HepG2 (cell line): ENCODE measurements at regions of chr11 and their contacts with region 1.

Region 1: GRCh38 chr11:2151500-2152257 is 9.3 kb downstream of the INS start:
- DNase-seq: peak; percentile 73
- ATAC-seq: peak; percentile 39
- H3K4me3 ChIP-seq: peak overlapping the region in 1 of 3 experiments; percentile 31; a peak in 1 of 6 replicates
- H3K27ac ChIP-seq: no peak overlapping the region
- H3K4me1 ChIP-seq: peaks cover 20% of the 10 kb centered on the region
- H3K27me3 ChIP-seq: peaks cover 20 to 44% of the 10 kb centered on the region in 2 experiments
- CTCF ChIP-seq: peak; percentile 86
- EP300 ChIP-seq: no peak
- POLR2A ChIP-seq: no peak
- RAD21 ChIP-seq: peak; percentile 83

Region 2: DNA sequence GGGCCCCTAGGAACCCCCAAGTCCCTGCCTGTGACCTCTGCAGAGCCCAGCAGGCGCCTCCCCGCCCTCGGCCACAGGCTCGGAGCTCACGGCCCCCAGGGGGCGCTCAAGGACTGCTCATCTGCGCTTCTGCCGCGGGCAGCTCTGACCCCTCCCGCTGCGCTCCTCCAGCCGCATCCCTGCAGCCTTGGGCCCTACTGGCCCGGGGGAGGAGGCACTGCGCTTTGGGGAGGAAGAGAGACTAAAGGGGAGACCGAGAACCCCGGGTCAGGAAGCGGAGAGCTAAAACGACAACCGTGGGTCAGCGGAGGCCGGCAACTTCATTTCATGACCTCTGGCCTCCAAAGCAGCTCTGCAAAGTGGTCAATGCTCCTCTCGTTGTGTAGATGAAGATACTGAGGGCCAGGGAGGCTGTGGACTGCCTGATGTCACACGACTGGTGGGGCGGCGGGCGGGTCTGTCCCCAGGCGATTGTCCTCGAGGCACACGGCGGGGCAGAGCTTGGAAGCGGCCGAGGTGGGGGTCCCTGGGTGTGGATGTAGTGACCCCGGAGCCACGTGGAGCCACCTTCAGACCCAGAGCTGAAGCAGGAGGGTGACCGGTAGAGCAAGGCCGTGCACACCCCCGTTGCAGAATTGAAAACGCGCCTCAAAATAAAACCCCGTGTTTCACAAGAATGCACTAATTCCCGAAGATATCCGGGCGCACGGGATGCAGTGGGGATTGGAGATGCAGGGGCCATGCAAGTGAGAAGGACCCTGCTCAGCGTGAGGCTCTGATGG is 457.4 kb before region 1 on chr11:
- CTCF ChIA-PET with region 1: interaction called, 24 read pairs
- POLR2A ChIA-PET with region 1: interaction called, 7 read pairs
- in situ Hi-C with region 1: loop called (anchors 5 kb)
- intact Hi-C with region 1: loop called (anchors 2 kb)
- DNase-seq: peak; percentile 53
- ATAC-seq: peak; percentile 38
- H3K4me3 ChIP-seq: peak overlapping the region in 2 of 3 experiments; percentile 14 to 58; a peak in 3 of 6 replicates
- H3K27ac ChIP-seq: peak overlapping the region; percentile 100
- H3K4me1 ChIP-seq: peaks cover 69% of the 10 kb centered on the region
- H3K27me3 ChIP-seq: peaks cover 0 to 3% of the 10 kb centered on the region in 2 experiments; a peak in 3 of 5 replicates
- CTCF ChIP-seq: peak; percentile 99
- EP300 ChIP-seq: peak in 1 of 2 experiments; percentile 38; a peak in 1 of 4 replicates
- POLR2A ChIP-seq: no peak
- RAD21 ChIP-seq: peak; percentile 97

Region 3: GRCh38 chr11:1837171-1838076 is 314.3 kb before region 1 on chr11:
- CTCF ChIA-PET with region 1: interaction called, 60 read pairs
- POLR2A ChIA-PET with region 1: no interaction called
- in situ Hi-C with region 1: loop called (anchors 5 kb)
- intact Hi-C with region 1: loop called (anchors 1 kb)
- DNase-seq: peak; percentile 45
- ATAC-seq: peak; percentile 64
- H3K4me3 ChIP-seq: no peak overlapping the region
- H3K27ac ChIP-seq: no peak overlapping the region
- H3K4me1 ChIP-seq: peaks cover 60% of the 10 kb centered on the region
- H3K27me3 ChIP-seq: peaks cover 9 to 20% of the 10 kb centered on the region in 2 experiments; a peak in 4 of 5 replicates
- CTCF ChIP-seq: peak; percentile 97
- EP300 ChIP-seq: no peak
- POLR2A ChIP-seq: no peak
- RAD21 ChIP-seq: peak; percentile 92

Region 4: GRCh38 chr11:1946812-1947484 is 204.7 kb before region 1 on chr11 and contains the start of gene MRPL23:
- CTCF ChIA-PET with region 1: interaction called, 27 read pairs
- POLR2A ChIA-PET with region 1: interaction called, 7 read pairs
- in situ Hi-C with region 1: no loop called
- intact Hi-C with region 1: no loop called
- DNase-seq: no peak
- ATAC-seq: peak; percentile 57
- H3K4me3 ChIP-seq: no peak within 1 kb of the TSS
- H3K27ac ChIP-seq: no peak within 1 kb of the TSS
- H3K4me1 ChIP-seq: peaks cover 7% of the 10 kb centered on the region; the same call in 1 of the 2 replicates
- H3K27me3 ChIP-seq: peaks cover 0 to 4% of the 10 kb centered on the region in 2 experiments; a peak in 2 of 5 replicates
- CTCF ChIP-seq: no peak
- EP300 ChIP-seq: no peak
- POLR2A ChIP-seq: no peak
- RAD21 ChIP-seq: no peak
- total RNA-seq, gene MRPL23: 123 and 126 TPM in 2 replicates

Region 5: GRCh38 chr11:1988667-1989317 is 162.9 kb before region 1 on chr11:
- CTCF ChIA-PET with region 1: no interaction called
- POLR2A ChIA-PET with region 1: interaction called, 15 read pairs
- in situ Hi-C with region 1: no loop called
- intact Hi-C with region 1: no loop called
- DNase-seq: peak; percentile 78
- ATAC-seq: peak; percentile 71
- H3K4me3 ChIP-seq: peak overlapping the region in 2 of 3 experiments; percentile 49 to 50; a peak in 3 of 6 replicates
- H3K27ac ChIP-seq: peak overlapping the region; percentile 90
- H3K4me1 ChIP-seq: no peaks in the 10 kb centered on the region
- H3K27me3 ChIP-seq: no peaks in the 10 kb centered on the region
- CTCF ChIP-seq: no peak
- EP300 ChIP-seq: no peak
- POLR2A ChIP-seq: peak; percentile 54 to 60; a peak in 3 of 4 replicates
- RAD21 ChIP-seq: no peak